Activated CD8-positive, alpha-beta T cell treated with anti-CD3 and anti-CD28 coated beads for 36 hours (primary cell): ENCODE measurements at regions of chr2 and their contacts with region 1.

Region 1: GRCh38 chr2:180980106-180980942 is at the start of gene UBE2E3:
- DNase-seq: peak; percentile 83
- ATAC-seq: peak; percentile 81
- H3K4me3 Mint-ChIP-seq: peak within 1 kb of the TSS; percentile 94
- H3K27ac Mint-ChIP-seq: peak within 1 kb of the TSS; percentile 98
- H3K4me1 Mint-ChIP-seq: peaks cover 39% of the 10 kb centered on the region
- H3K27me3 Mint-ChIP-seq: no peaks in the 10 kb centered on the region
- CTCF ChIP-seq: peak; percentile 56
- total RNA-seq, gene UBE2E3: 26.7 to 29.4 TPM

Region 2: GRCh38 chr2:180728928-180729559 is 251.3 kb before region 1 on chr2:
- CTCF ChIA-PET with region 1: no interaction called
- POLR2A ChIA-PET with region 1: no interaction called
- intact Hi-C with region 1: no loop called
- DNase-seq: no peak
- ATAC-seq: no peak
- H3K4me3 Mint-ChIP-seq: no peak overlapping the region
- H3K27ac Mint-ChIP-seq: no peak overlapping the region
- H3K4me1 Mint-ChIP-seq: no peaks in the 10 kb centered on the region
- H3K27me3 Mint-ChIP-seq: no peaks in the 10 kb centered on the region
- CTCF ChIP-seq: no peak

Region 3: DNA sequence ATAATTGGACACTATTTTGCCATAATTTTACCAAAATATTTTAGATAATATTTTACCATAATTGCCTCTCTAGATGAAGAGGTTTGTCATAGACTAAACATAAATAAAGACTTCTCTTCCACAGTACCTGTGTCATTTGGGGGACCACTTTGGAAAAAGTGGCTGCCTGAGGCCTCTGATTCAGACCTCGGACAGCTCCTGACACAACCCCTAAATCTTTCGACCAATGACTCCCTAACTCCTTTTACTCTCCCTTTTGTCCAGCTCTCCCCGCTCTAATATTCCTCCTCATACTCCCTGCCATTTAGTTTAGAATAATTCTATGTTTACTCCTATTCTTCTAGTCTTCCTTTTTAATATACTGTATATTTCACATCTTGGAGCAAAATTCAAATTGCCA is 36.0 kb before region 1 on chr2:
- CTCF ChIA-PET with region 1: no interaction called
- POLR2A ChIA-PET with region 1: no interaction called
- intact Hi-C with region 1: no loop called
- DNase-seq: no peak
- ATAC-seq: no peak
- H3K4me3 Mint-ChIP-seq: no peak overlapping the region
- H3K27ac Mint-ChIP-seq: no peak overlapping the region
- H3K4me1 Mint-ChIP-seq: peaks cover 3% of the 10 kb centered on the region
- H3K27me3 Mint-ChIP-seq: peaks cover 5% of the 10 kb centered on the region
- CTCF ChIP-seq: no peak

Region 4: GRCh38 chr2:180970016-180970415 is 10.3 kb before region 1 on chr2:
- CTCF ChIA-PET with region 1: interaction called, 18 read pairs
- POLR2A ChIA-PET with region 1: interaction called, 7 read pairs
- intact Hi-C with region 1: no loop called
- DNase-seq: no peak
- ATAC-seq: no peak
- H3K4me3 Mint-ChIP-seq: no peak overlapping the region
- H3K27ac Mint-ChIP-seq: no peak overlapping the region
- H3K4me1 Mint-ChIP-seq: no peaks in the 10 kb centered on the region
- H3K27me3 Mint-ChIP-seq: peaks cover 6% of the 10 kb centered on the region
- CTCF ChIP-seq: no peak

Region 5: DNA sequence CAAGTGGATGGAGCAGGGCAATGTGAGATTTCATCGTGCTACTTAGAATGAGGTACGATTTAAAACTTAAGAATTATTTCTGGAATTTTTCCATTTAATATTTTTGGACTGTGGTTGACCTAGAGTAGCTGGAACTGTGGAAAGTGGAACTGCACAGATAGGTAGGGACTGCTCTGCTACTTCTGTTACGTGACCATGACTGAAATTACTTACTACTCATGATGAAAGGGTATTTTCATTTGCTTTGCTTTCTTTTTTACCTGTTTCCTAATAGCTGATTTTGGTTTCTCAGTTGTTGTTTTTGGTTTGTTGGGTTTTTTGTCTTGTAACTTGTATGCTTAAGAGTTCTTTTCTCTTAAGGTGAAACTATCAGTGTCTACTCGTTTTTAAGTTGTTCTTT is 11.5 kb after region 1 on chr2:
- CTCF ChIA-PET with region 1: interaction called, 8 read pairs
- POLR2A ChIA-PET with region 1: interaction called, 20 read pairs
- intact Hi-C with region 1: no loop called
- DNase-seq: no peak
- ATAC-seq: no peak
- H3K4me3 Mint-ChIP-seq: no peak overlapping the region
- H3K27ac Mint-ChIP-seq: no peak overlapping the region
- H3K4me1 Mint-ChIP-seq: peaks cover 23% of the 10 kb centered on the region
- H3K27me3 Mint-ChIP-seq: no peaks in the 10 kb centered on the region
- CTCF ChIP-seq: no peak

Region 6: DNA sequence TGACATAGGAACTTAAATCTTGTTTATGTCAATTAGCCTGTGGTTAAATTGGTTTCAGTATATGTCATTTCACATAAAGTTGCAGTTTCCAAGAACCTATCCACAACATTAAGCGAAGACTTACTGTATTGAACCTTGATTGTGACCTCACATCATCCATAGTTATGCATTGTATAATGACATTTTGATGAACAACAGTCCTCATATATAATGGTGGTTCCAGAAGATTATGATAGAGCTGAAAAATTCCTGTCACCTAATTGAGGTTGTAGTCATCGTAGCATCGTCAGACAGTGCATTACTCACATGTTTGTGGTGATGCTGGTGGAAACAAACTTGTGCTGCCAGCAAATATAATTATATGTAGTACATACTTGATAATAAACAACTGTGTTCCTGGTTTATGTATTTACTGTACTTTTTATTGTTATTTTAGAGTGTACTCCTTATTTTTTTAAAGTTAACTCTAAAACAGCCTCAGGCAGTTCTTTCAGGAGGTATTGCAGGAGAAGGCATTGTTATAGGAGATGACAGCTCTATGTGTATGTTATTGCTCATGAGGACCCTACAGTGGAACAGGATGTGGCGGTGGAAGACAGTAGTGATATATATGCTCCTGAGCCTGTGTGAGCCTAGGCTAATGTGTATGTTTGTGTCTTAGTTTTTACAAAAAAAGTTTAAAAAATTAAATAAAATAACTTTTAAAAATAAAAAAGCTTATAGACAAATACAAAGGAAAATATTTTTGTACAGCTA is 56.7 kb after region 1 on chr2:
- CTCF ChIA-PET with region 1: interaction called, 4 read pairs
- POLR2A ChIA-PET with region 1: interaction called, 7 read pairs
- intact Hi-C with region 1: loop called (anchors 5 kb)
- DNase-seq: peak; percentile 57
- ATAC-seq: peak; percentile 86
- H3K4me3 Mint-ChIP-seq: no peak overlapping the region
- H3K27ac Mint-ChIP-seq: no peak overlapping the region
- H3K4me1 Mint-ChIP-seq: peaks cover 24% of the 10 kb centered on the region
- H3K27me3 Mint-ChIP-seq: no peaks in the 10 kb centered on the region
- CTCF ChIP-seq: no peak

Region 7: GRCh38 chr2:181058378-181059269 is 78.3 kb after region 1 on chr2:
- CTCF ChIA-PET with region 1: interaction called, 18 read pairs
- POLR2A ChIA-PET with region 1: no interaction called
- intact Hi-C with region 1: loop called (anchors 2 kb)
- DNase-seq: peak; percentile 68
- ATAC-seq: peak; percentile 66
- H3K4me3 Mint-ChIP-seq: no peak overlapping the region
- H3K27ac Mint-ChIP-seq: no peak overlapping the region
- H3K4me1 Mint-ChIP-seq: peaks cover 6% of the 10 kb centered on the region
- H3K27me3 Mint-ChIP-seq: no peaks in the 10 kb centered on the region
- CTCF ChIP-seq: peak; percentile 98